WTC11 (cell line): ENCODE measurements at regions of chr14 and their contacts with region 1.

Region 1: DNA sequence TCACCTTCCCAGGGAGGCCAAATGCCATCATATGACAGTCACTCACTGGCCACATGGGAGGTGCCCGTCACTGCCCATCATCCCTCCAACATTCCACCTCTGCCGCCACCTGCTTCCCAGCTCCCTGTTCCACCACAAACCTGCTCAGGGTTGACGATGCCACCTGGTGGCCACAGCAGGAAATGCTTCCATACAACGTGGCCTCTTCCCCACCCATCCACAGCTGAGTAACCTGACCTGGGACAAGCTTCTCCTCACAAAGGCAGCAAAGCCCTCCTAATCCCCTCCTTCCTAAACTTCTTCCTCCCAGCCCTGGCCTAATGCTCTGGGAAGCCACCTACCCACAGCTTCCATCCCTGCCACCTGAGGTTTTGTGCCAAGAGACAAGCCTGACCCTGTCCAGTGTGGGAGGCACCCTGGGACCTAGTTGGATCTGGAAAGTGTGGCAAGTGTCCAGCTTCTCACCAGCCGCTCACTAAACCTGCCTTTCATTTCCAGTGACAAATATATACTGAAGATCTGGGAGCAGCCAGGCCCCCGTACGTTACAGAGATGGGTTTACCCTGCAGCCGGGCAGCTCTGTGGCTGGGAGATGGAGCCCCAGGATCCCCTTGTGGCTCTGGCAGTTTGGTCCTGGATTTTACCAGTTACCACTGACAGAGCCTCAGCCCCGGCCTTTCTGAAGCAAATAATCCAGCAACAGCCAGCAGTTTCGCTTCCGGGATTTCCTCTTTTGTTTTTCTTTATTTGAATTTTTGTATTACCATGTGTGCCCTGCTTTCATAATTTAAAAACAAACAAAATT is 4.2 kb downstream of the DEGS2 start:
- DNase-seq: peak; percentile 89
- ATAC-seq: peak; percentile 69
- H3K4me3 Mint-ChIP-seq: no peak overlapping the region
- H3K27ac Mint-ChIP-seq: no peak overlapping the region
- H3K4me1 Mint-ChIP-seq: peaks cover 10% of the 10 kb centered on the region; the same call in 1 of the 2 replicates
- H3K27me3 Mint-ChIP-seq: peaks cover 51% of the 10 kb centered on the region
- CTCF ChIP-seq: peak; percentile 84

Region 2: GRCh38 chr14:99937475-99938244 is 217.6 kb before region 1 on chr14:
- CTCF ChIA-PET with region 1: interaction called, 11 read pairs
- POLR2A ChIA-PET with region 1: no interaction called
- DNase-seq: no peak
- ATAC-seq: no peak
- H3K4me3 Mint-ChIP-seq: no peak overlapping the region
- H3K27ac Mint-ChIP-seq: no peak overlapping the region
- H3K4me1 Mint-ChIP-seq: peaks cover 11% of the 10 kb centered on the region
- H3K27me3 Mint-ChIP-seq: no peaks in the 10 kb centered on the region
- CTCF ChIP-seq: no peak

Region 3: GRCh38 chr14:100078991-100079725 is 76.1 kb before region 1 on chr14:
- CTCF ChIA-PET with region 1: interaction called, 13 read pairs
- POLR2A ChIA-PET with region 1: no interaction called
- DNase-seq: peak; percentile 56
- ATAC-seq: peak; percentile 83
- H3K4me3 Mint-ChIP-seq: no peak overlapping the region
- H3K27ac Mint-ChIP-seq: peak overlapping the region; percentile 80
- H3K4me1 Mint-ChIP-seq: peaks cover 29% of the 10 kb centered on the region
- H3K27me3 Mint-ChIP-seq: no peaks in the 10 kb centered on the region
- CTCF ChIP-seq: no peak

Region 4: GRCh38 chr14:100122481-100123222 is 32.6 kb before region 1 on chr14:
- CTCF ChIA-PET with region 1: interaction called, 17 read pairs
- POLR2A ChIA-PET with region 1: no interaction called
- DNase-seq: no peak
- ATAC-seq: no peak
- H3K4me3 Mint-ChIP-seq: no peak overlapping the region
- H3K27ac Mint-ChIP-seq: peak overlapping the region; percentile 9; the same call in 1 of the 2 replicates
- H3K4me1 Mint-ChIP-seq: no peaks in the 10 kb centered on the region
- H3K27me3 Mint-ChIP-seq: no peaks in the 10 kb centered on the region
- CTCF ChIP-seq: no peak

Region 5: DNA sequence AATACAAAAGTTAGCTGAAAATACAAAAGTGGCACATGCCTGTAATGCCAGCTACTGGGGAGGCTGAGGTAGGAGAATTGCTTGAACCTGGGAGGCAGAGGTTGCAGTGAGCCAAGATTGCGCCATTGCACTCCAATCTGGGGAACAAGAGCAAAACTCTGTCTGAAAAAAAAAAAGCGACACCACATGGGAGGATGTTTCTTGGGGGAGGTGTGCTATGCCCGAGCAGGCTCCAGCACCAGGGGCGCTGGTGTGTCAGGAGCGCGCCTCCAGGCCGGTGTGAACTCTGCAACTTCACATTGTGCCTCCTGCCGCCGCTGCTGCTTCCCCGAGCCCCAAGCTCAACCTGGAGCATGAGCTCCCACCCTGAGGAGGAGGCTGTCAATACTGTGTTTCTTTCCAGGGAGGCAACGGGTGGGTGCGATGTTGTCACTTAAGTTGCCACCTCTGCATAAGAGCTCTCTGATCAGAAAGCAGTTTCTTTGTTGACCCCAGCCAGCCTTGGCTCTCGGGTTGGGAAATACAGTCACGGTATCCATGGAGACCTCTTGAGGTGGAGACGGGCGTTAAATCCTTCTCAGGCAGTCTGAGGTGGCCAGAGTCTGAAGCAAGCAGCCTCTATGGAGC is 14.7 kb before region 1 on chr14:
- CTCF ChIA-PET with region 1: interaction called, 136 read pairs
- POLR2A ChIA-PET with region 1: no interaction called
- DNase-seq: peak; percentile 74
- ATAC-seq: peak; percentile 86
- H3K4me3 Mint-ChIP-seq: no peak overlapping the region
- H3K27ac Mint-ChIP-seq: 0 out of 2 replicates have a peak overlapping the region, but pooled peaks have one; percentile 49
- H3K4me1 Mint-ChIP-seq: peaks cover 8% of the 10 kb centered on the region
- H3K27me3 Mint-ChIP-seq: no peaks in the 10 kb centered on the region
- CTCF ChIP-seq: 0 out of 2 replicates have a peak, but pooled peaks have one; percentile 14

Region 6: GRCh38 chr14:100203949-100204834 is 48.9 kb after region 1 on chr14:
- CTCF ChIA-PET with region 1: no interaction called
- POLR2A ChIA-PET with region 1: no interaction called
- DNase-seq: no peak
- ATAC-seq: no peak
- H3K4me3 Mint-ChIP-seq: no peak overlapping the region
- H3K27ac Mint-ChIP-seq: no peak overlapping the region
- H3K4me1 Mint-ChIP-seq: peaks cover 8% of the 10 kb centered on the region
- H3K27me3 Mint-ChIP-seq: peaks cover 3% of the 10 kb centered on the region; the same call in 1 of the 2 replicates
- CTCF ChIP-seq: no peak

Region 7: DNA sequence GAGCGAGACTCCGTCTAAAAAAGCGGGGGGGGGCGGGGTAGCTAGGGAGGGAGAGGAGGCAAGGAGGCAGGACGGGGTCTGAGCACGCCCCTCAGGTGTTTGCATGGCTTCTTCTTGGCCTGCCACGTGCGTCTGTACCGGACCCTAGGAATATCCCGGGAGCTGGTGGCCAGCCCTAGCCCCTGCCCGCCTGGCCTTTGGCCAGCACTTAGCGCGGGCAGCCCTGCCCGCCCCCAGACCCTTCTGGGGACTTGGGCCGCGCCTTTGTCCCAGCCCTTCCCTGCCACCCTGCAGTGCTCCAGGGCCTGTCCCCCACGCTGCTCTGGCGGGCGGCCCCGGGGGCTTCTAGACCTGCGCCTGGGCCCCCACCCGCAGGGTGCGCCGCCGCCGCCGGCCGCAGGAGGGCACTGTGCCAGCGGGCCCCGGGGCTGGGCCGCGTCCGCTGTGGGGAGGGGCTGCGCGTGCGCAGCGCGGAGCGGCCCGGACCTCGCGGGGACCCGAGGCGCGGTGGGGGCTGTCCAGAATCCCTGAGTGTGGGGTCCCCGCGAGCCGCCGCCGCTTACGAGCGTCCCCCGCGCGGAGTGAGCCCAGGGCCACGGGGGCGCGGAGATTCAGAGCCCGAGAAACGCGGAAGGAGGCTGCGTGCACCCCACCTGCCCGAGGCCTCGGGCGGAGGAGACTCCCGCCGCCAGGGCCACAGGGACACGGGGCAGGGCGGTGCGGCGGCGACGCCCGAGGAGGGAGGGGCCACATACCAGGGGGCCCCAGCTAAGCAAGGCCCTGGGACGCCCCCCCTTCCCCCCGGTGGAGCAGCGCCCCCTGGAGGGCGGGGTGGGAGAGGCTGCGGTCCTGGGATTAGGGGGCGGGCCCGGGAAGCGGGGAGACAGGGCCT is 130.0 kb after region 1 on chr14:
- CTCF ChIA-PET with region 1: interaction called, 12 read pairs
- POLR2A ChIA-PET with region 1: interaction called, 4 read pairs
- DNase-seq: peak; percentile 80
- ATAC-seq: peak; percentile 69
- H3K4me3 Mint-ChIP-seq: peak overlapping the region; percentile 64
- H3K27ac Mint-ChIP-seq: no peak overlapping the region; the same call in 1 of the 2 replicates
- H3K4me1 Mint-ChIP-seq: peaks cover 47% of the 10 kb centered on the region
- H3K27me3 Mint-ChIP-seq: no peaks in the 10 kb centered on the region
- CTCF ChIP-seq: peak; percentile 82